ENCODE measurements at regions of chr1 and their contacts with region 1.

Region 1: DNA sequence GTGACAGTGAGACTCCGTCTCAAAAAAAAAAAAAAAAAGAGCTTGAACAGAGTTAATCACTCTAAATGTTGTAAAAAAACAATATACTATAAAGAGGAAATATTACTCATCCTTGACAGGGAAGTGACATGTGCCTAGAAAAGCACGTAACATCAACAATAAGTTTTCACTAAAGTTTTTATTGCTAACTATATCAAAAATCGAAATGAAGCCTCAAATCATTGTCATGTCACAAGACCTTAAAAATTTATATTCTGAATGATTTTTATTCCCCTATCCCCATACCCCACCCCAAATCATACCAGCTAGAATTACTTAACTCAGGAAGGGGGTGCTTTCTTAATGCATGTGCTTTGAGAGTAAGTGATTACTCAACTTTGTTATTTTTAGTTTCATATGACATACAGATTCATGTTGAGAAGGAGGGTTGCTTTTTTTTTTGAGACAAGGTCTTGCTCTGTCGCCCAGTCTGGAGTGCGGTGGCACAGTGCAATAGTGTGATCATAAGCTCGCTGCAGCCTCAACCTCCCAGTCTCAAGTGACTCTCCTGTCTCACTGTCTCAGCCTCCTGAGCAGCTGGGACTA is 53.6 kb upstream of the MUTYH start:
- DNase-seq: peak; percentile 41
- ATAC-seq: peak; percentile 88
- H3K4me3 Mint-ChIP-seq: peak overlapping the region; percentile 62
- H3K27ac Mint-ChIP-seq: peak overlapping the region; percentile 94
- H3K4me1 Mint-ChIP-seq: peaks cover 52% of the 10 kb centered on the region
- H3K27me3 Mint-ChIP-seq: no peaks in the 10 kb centered on the region
- CTCF ChIP-seq: no peak

Region 2: GRCh38 chr1:45339789-45340570 is 53.8 kb before region 1 on chr1 and contains the starts of genes MUTYH and TOE1:
- CTCF ChIA-PET with region 1: no interaction called
- POLR2A ChIA-PET with region 1: interaction called, 18 read pairs
- intact Hi-C with region 1: no loop called
- DNase-seq: peak; percentile 85
- ATAC-seq: peak; percentile 86
- H3K4me3 Mint-ChIP-seq: peak within 1 kb of the TSS; percentile 100
- H3K27ac Mint-ChIP-seq: peak within 1 kb of the TSS; percentile 99
- H3K4me1 Mint-ChIP-seq: peaks cover 39% of the 10 kb centered on the region
- H3K27me3 Mint-ChIP-seq: no peaks in the 10 kb centered on the region
- CTCF ChIP-seq: no peak
- total RNA-seq, gene MUTYH: 61.0 and 63.0 TPM in 2 replicates
- total RNA-seq, gene TOE1: 24.6 and 25.3 TPM in 2 replicates

Region 3: DNA sequence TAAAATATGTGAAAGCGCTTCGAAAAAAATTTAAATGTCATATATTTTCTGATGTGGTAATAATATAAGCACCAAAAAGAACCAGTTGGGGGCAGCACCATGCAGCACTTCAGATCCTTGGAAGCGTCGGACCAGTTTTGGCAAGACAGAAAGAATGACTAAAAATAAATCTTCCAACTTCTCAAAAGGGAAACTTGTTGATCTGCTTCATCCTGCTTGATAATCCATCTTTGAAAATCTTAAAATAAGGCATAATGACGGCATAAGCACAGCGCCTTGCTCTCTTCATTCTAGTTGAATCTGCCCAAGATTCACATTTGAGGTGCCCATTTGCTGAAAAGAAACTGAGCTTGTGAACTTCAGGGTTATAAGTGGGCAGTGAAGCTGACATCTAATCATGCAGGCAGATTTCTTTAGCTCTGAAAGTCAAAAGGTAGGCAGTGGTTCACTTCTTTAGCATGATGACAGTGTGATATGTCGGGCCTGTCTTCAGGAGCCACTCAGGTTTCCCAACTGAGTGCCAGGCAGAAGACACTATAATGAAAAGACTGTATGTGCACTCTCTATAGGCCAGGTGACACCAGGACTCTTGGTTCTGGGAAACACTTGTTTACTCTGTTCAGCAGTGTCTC is 33.8 kb before region 1 on chr1:
- CTCF ChIA-PET with region 1: interaction called, 10 read pairs
- POLR2A ChIA-PET with region 1: interaction called, 9 read pairs
- intact Hi-C with region 1: loop called (anchors 1 kb)
- DNase-seq: no peak
- ATAC-seq: peak; percentile 73
- H3K4me3 Mint-ChIP-seq: peak overlapping the region; percentile 1
- H3K27ac Mint-ChIP-seq: peak overlapping the region; percentile 37
- H3K4me1 Mint-ChIP-seq: peaks cover 19% of the 10 kb centered on the region
- H3K27me3 Mint-ChIP-seq: no peaks in the 10 kb centered on the region
- CTCF ChIP-seq: no peak

Region 4: GRCh38 chr1:45373573-45373972 is 20.2 kb before region 1 on chr1:
- CTCF ChIA-PET with region 1: interaction called, 3 read pairs
- POLR2A ChIA-PET with region 1: interaction called, 12 read pairs
- intact Hi-C with region 1: no loop called
- DNase-seq: no peak
- ATAC-seq: no peak
- H3K4me3 Mint-ChIP-seq: peak overlapping the region; percentile 21
- H3K27ac Mint-ChIP-seq: peak overlapping the region; percentile 46
- H3K4me1 Mint-ChIP-seq: peaks cover 47% of the 10 kb centered on the region
- H3K27me3 Mint-ChIP-seq: no peaks in the 10 kb centered on the region
- CTCF ChIP-seq: no peak

Region 5: GRCh38 chr1:45405636-45406035 is 11.8 kb after region 1 on chr1:
- CTCF ChIA-PET with region 1: interaction called, 3 read pairs
- POLR2A ChIA-PET with region 1: interaction called, 32 read pairs
- intact Hi-C with region 1: no loop called
- DNase-seq: no peak
- ATAC-seq: no peak
- H3K4me3 Mint-ChIP-seq: no peak overlapping the region
- H3K27ac Mint-ChIP-seq: no peak overlapping the region
- H3K4me1 Mint-ChIP-seq: peaks cover 35% of the 10 kb centered on the region
- H3K27me3 Mint-ChIP-seq: no peaks in the 10 kb centered on the region
- CTCF ChIP-seq: no peak

Region 6: DNA sequence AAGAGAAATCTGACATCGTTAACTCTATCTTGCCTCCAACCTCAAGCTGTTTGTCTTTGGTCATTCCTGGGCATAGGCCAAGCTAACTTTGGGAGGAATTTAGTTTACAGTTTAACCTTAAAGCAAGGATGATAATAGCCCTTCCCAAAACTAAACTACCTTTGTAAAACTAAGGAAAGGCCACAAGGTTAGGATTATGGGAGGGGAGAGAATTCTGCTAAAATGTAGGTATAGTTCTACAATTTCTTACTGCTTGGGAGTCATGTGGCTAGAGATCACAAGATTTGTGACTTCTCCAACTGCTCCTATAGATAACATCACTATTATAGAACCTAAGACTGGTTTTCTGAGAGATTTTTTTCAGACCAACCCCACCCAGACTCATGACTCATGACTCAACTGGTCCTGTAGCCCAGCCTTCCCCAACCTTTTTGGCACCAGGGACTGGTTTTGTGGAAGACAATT is 17.1 kb after region 1 on chr1:
- CTCF ChIA-PET with region 1: interaction called, 3 read pairs
- POLR2A ChIA-PET with region 1: interaction called, 32 read pairs
- intact Hi-C with region 1: loop called (anchors 1 kb)
- DNase-seq: no peak
- ATAC-seq: no peak
- H3K4me3 Mint-ChIP-seq: peak overlapping the region; percentile 25
- H3K27ac Mint-ChIP-seq: peak overlapping the region; percentile 75
- H3K4me1 Mint-ChIP-seq: peaks cover 68% of the 10 kb centered on the region
- H3K27me3 Mint-ChIP-seq: no peaks in the 10 kb centered on the region
- CTCF ChIP-seq: no peak

Region 7: DNA sequence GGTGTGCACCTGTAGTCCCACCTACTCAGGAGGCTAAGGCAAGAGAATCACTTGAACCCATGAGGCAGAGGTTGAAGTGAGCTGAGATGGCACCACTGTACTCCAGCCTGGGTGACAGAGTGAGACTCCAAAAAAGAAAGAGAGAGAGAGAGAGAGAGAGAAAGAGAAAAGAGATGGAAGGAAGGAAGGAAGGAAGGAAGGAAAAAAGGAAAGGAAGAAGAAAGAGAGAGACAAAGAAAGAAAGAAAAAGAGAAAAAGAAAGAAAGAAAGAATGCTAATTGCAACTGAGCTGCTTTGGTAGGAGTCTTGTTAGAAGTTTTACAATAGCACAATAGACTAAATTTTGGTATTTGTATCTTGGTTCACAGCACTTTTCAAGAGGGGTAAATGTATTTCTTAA is 71.5 kb after region 1 on chr1:
- CTCF ChIA-PET with region 1: no interaction called
- POLR2A ChIA-PET with region 1: interaction called, 3 read pairs
- intact Hi-C with region 1: loop called (anchors 5 kb)
- DNase-seq: no peak
- ATAC-seq: no peak
- H3K4me3 Mint-ChIP-seq: no peak overlapping the region
- H3K27ac Mint-ChIP-seq: no peak overlapping the region
- H3K4me1 Mint-ChIP-seq: peaks cover 28% of the 10 kb centered on the region
- H3K27me3 Mint-ChIP-seq: no peaks in the 10 kb centered on the region
- CTCF ChIP-seq: no peak

Measured in activated B cell treated with CpG ODN at 0.5 μM for 24 hours (primary cell).